Esophagus squamous epithelium (tissue), 5 donors: ENCODE measurements at regions of chr20 and their contacts with region 1.

Region 1: GRCh38 chr20:44080646-44081267 is 106.2 kb downstream of the JPH2 start:
- DNase-seq: no peak
- H3K4me3 ChIP-seq: no peak overlapping the region
- H3K27ac ChIP-seq: peak overlapping the region in 1 of 4 donors; percentile 29
- H3K4me1 ChIP-seq: peaks cover 0 to 7% (median 0%) of the 10 kb centered on the region in 3 donors
- H3K27me3 ChIP-seq: no peaks in the 10 kb centered on the region
- CTCF ChIP-seq: peak; percentile 87 to 100 (median 99)
- POLR2A ChIP-seq: no peak

Region 2: GRCh38 chr20:43456809-43457639 is 623.7 kb before region 1 on chr20:
- intact Hi-C with region 1: loop called (anchors 10 kb)
- DNase-seq: peak; percentile 65
- H3K4me3 ChIP-seq: peak overlapping the region; percentile 86 to 96 (median 93)
- H3K27ac ChIP-seq: peak overlapping the region; percentile 99 to 100 (median 100)
- H3K4me1 ChIP-seq: peaks cover 12 to 37% (median 12%) of the 10 kb centered on the region in 3 donors
- H3K27me3 ChIP-seq: peaks cover 0 to 17% (median 0%) of the 10 kb centered on the region in 4 donors
- CTCF ChIP-seq: no peak
- POLR2A ChIP-seq: no peak

Region 3: GRCh38 chr20:43537921-43538877 is 542.6 kb before region 1 on chr20:
- intact Hi-C with region 1: loop called (anchors 10 kb)
- DNase-seq: no peak
- H3K4me3 ChIP-seq: no peak overlapping the region
- H3K27ac ChIP-seq: no peak overlapping the region
- H3K4me1 ChIP-seq: no peaks in the 10 kb centered on the region
- H3K27me3 ChIP-seq: no peaks in the 10 kb centered on the region
- CTCF ChIP-seq: peak; percentile 63 to 89 (median 76)
- POLR2A ChIP-seq: no peak

Region 4: DNA sequence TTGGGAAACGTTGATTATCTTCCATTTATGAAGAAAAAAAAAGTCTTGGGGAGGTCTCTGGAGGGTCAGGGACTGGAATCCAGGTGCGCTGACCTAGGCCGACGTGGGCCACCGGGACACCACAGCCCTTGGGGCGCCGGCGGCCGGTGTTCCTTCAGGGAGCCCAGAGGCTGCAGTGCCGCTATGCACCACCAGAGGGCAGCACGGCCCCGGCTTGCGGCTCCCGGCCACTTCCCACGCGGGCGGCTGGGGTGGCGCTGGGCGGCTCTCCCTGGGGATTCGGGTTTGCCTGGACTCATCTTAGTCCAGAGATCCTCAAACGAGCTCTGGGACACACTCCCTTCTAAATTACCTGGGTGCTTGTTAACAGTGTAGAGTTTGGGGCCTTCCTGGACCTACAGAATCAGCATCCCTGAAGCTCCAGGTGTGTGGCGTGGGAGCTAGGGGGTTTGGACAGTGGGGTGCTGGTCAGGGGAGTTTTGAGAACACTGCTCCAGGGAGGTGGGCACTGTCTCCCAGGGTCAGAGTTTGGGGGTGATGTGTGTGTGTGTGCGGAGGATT is 330.9 kb before region 1 on chr20:
- intact Hi-C with region 1: loop called (anchors 5 kb)
- DNase-seq: no peak
- H3K4me3 ChIP-seq: no peak overlapping the region
- H3K27ac ChIP-seq: peak overlapping the region; percentile 11 to 89 (median 72)
- H3K4me1 ChIP-seq: peaks cover 6 to 16% (median 12%) of the 10 kb centered on the region in 3 donors
- H3K27me3 ChIP-seq: peaks cover 0 to 55% (median 0%) of the 10 kb centered on the region in 4 donors
- CTCF ChIP-seq: peak; percentile 98 to 100 (median 99)
- POLR2A ChIP-seq: no peak

Region 5: DNA sequence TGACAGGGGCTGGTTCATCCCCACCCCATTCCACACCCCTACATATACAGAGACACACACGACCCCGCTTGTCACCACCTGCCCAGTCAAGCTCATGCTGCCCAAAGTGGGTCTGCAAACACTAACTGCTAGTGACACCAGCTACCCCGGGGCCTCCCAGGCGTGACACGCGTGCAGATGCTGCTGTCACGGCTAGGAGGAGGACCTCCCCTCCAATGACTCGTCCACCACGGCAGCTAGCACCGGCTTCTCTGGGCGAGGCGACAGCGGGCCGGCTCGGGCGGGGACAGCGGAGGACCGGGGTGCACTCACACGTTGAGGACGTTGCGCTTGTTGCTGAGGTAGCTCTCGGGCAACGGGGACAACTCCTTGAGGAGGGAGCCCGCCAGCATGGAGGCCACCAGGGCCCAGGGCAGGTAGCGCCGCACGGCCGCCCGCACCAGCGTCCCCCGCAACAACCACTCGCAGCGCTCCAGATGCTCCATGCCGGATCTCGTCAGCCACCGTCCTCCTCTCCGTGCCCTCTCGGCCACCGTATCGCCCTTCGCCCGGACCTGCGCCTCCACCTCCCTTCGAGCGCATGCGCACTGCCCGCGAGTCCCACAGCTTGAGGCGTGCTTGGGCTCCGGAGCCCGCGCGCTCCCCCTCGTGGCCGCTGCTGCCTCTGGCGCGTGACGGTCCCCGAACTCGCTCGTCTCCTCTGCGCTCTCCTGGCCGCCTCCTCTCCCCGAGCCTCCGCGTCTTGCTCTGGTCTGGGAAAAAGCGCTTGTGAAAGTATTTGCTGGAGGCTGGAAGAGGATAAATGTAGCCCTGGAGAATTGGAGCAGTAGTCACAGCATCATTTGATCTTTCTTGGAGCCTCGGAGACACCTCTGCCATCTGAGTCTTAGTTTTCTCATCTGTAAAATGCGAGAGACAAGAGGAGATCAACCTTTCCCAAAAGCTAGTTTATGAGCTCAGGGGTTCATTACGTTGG is 230.2 kb after region 1 on chr20 and contains the start of gene FITM2:
- intact Hi-C with region 1: no loop called
- DNase-seq: peak; percentile 91
- H3K4me3 ChIP-seq: peak within 1 kb of the TSS; percentile 72 to 82 (median 78)
- H3K27ac ChIP-seq: peak within 1 kb of the TSS; percentile 70 to 83 (median 78)
- H3K4me1 ChIP-seq: peaks cover 14 to 27% (median 17%) of the 10 kb centered on the region in 3 donors
- H3K27me3 ChIP-seq: no peaks in the 10 kb centered on the region
- CTCF ChIP-seq: peak; percentile 89 to 99 (median 93)
- POLR2A ChIP-seq: peak in 2 of 4 donors; percentile 44 to 63
- total RNA-seq, gene FITM2: 2.1 to 4.8 (median 3.7) TPM